ENCODE measurements at regions of chr13 and their contacts with region 1.

Region 1: GRCh38 chr13:50123862-50124536 is 108.8 kb downstream of the KCNRG start:
- DNase-seq: peak; percentile 83 to 99 (median 85)
- ATAC-seq: peak; percentile 92 to 94 (median 94)
- H3K4me3 ChIP-seq: peak overlapping the region; percentile 71 to 98 (median 90)
- H3K27ac ChIP-seq: peak overlapping the region; percentile 99 to 100 (median 99)
- H3K4me1 ChIP-seq: peaks cover 0 to 69% (median 36%) of the 10 kb centered on the region in 12 donors
- H3K27me3 ChIP-seq: peaks cover 0 to 6% (median 0%) of the 10 kb centered on the region in 9 donors
- CTCF ChIP-seq: peak in 4 of 12 donors; percentile 10 to 41 (median 15)
- POLR2A ChIP-seq: peak in 1 of 2 donors; percentile 92

Region 2: DNA sequence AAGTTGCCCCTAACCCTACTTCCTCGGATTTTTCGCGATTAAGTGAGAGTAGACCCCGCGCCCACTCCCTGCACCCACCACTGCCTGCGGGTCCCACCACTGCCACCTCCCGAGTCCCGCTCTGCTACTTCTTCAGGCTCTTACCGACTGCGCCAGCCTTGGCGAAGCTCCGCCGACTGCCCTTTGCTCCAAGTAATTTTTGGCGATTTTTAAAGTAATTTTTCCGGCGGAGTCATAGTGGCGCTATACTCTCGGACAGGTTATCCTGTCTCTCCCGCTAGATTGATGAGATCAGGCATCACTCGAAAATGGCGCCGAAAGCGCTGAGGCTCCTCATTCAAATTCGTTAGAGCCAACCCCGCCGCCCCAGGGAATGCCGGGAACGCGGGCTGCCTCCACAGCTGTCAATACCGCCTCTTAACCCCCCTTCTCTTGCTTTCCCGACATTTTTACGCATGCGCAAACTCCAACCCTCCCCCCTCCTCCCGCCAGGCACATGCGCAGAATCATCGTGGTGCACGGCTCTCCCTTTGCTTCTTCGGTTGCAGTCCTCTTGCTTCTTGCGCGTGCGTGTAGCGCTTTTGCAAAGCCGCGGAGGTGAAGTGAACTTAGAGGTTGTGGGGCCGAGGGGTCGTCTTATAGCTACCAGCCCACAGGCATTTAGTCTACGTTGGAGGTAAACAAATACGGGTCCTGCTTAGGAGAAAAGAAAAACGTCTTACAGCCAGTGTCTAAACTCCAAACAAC is 42.1 kb before region 1 on chr13:
- intact Hi-C with region 1: loop called (anchors 2 to 5 kb)
- DNase-seq: peak; percentile 97 to 98 (median 98)
- ATAC-seq: peak; percentile 95 to 97 (median 96)
- H3K4me3 ChIP-seq: peak overlapping the region; percentile 41 to 80 (median 69)
- H3K27ac ChIP-seq: peak overlapping the region in 11 of 12 donors; percentile 67 to 88 (median 78)
- H3K4me1 ChIP-seq: peaks cover 0 to 64% (median 26%) of the 10 kb centered on the region in 12 donors
- H3K27me3 ChIP-seq: no peaks in the 10 kb centered on the region
- CTCF ChIP-seq: peak in 2 of 12 donors; percentile 14 to 21
- POLR2A ChIP-seq: no peak

Region 3: GRCh38 chr13:50594276-50595051 is 470.5 kb after region 1 on chr13:
- intact Hi-C with region 1: loop called in 1 of 10 experiments (anchors 10 kb)
- DNase-seq: no peak
- ATAC-seq: no peak
- H3K4me3 ChIP-seq: peak overlapping the region in 1 of 12 donors; percentile 7
- H3K27ac ChIP-seq: peak overlapping the region in 6 of 12 donors; percentile 10 to 63 (median 28)
- H3K4me1 ChIP-seq: peaks cover 0 to 58% (median 29%) of the 10 kb centered on the region in 12 donors
- H3K27me3 ChIP-seq: no peaks in the 10 kb centered on the region
- CTCF ChIP-seq: no peak
- POLR2A ChIP-seq: no peak

Region 4: DNA sequence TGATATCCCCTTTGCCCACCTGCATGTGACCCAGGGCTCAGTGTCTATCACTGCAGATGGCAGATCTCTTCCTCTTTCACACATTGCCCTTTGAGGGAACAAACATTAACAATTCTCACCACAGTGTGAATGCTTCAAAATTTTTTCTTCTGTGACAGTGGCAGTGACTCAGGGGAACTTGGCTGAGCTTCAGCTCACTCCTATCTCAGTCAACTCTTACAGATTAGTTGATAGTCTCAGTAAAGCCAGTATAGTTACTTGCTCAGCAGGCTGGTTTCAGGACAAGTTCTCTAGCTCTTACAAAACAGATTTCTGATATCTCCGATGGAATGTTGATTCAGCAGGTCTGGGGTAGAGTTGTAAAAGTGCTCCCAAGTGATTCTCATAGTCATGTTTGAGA is 552.6 kb after region 1 on chr13:
- intact Hi-C with region 1: loop called in 1 of 10 experiments (anchors 10 kb)
- DNase-seq: no peak
- ATAC-seq: peak in 1 of 4 donors; percentile 25
- H3K4me3 ChIP-seq: no peak overlapping the region
- H3K27ac ChIP-seq: peak overlapping the region in 3 of 12 donors; percentile 3 to 24 (median 12)
- H3K4me1 ChIP-seq: peaks cover 0 to 24% (median 18%) of the 10 kb centered on the region in 12 donors
- H3K27me3 ChIP-seq: no peaks in the 10 kb centered on the region
- CTCF ChIP-seq: no peak
- POLR2A ChIP-seq: no peak

Measured in heart left ventricle (tissue), 16 donors.